ENCODE measurements at regions of chr10 and their contacts with region 1.

Region 1: DNA sequence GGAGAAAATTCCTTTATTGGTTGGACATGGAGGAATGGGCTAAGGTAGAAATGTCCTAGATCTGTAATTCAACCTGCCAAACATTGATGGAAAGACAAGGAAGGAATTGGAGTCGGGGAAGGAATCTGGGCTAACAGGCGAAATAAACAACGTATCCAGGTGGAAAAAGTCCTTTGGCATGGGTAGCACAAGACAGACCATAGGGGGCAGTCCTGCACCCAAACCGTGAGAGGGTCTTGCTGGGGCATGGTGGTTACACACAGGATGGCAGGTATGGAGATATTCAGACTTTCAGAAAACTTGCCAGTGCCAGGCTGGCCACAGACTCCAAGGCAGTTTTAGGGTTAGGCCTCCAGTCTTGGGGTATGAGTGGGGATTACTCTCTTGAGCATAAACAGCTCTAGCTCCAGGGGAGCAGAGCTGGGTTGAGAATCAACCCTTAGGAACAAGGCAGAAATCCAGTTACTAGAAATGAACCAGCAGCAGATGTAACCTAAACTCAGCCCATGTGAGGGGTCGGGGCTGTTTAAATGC is 188.6 kb upstream of the GDF10 start:
- DNase-seq: no peak
- ATAC-seq: no peak
- H3K4me3 ChIP-seq: no peak overlapping the region
- H3K27ac ChIP-seq: no peak overlapping the region
- H3K4me1 ChIP-seq: peaks cover 0 to 12% (median 0%) of the 10 kb centered on the region in 12 donors
- H3K27me3 ChIP-seq: peaks cover 0 to 3% (median 0%) of the 10 kb centered on the region in 9 donors
- CTCF ChIP-seq: no peak
- POLR2A ChIP-seq: no peak

Region 2: GRCh38 chr10:47159938-47160908 is 48.8 kb after region 1 on chr10:
- intact Hi-C with region 1: loop called in 1 of 10 experiments (anchors 5 kb)
- DNase-seq: no peak
- ATAC-seq: no peak
- H3K4me3 ChIP-seq: no peak overlapping the region
- H3K27ac ChIP-seq: no peak overlapping the region
- H3K4me1 ChIP-seq: peaks cover 0 to 11% (median 0%) of the 10 kb centered on the region in 12 donors
- H3K27me3 ChIP-seq: peaks cover 0 to 8% (median 0%) of the 10 kb centered on the region in 9 donors
- CTCF ChIP-seq: no peak
- POLR2A ChIP-seq: no peak

Measured in heart left ventricle (tissue), 16 donors.